ENCODE measurements at regions of chr4 and their contacts with region 1.

Region 1: GRCh38 chr4:153127760-153128494 is 76.3 kb upstream of the TRIM2 start:
- DNase-seq: peak; percentile 64 to 92 (median 81)
- ATAC-seq: peak; percentile 84 to 90 (median 88)
- H3K4me3 ChIP-seq: no peak overlapping the region
- H3K4me3 Mint-ChIP-seq: no peak overlapping the region
- H3K27ac ChIP-seq: no peak overlapping the region
- H3K27ac Mint-ChIP-seq: peak overlapping the region in 1 of 2 donors; percentile 6
- H3K4me1 ChIP-seq: peaks cover 0 to 3% of the 10 kb centered on the region in 2 experiments
- H3K4me1 Mint-ChIP-seq: peaks cover 0 to 5% (median 4%) of the 10 kb centered on the region in 3 donors
- H3K27me3 ChIP-seq: peaks cover 0 to 3% of the 10 kb centered on the region in 2 experiments
- H3K27me3 Mint-ChIP-seq: no peaks in the 10 kb centered on the region

Region 2: GRCh38 chr4:152849350-152849749 is 278.6 kb before region 1 on chr4:
- CTCF ChIA-PET with region 1: interaction called, 7 to 31 read pairs
- POLR2A ChIA-PET with region 1: no interaction called
- DNase-seq: no peak
- ATAC-seq: no peak
- H3K4me3 ChIP-seq: no peak overlapping the region
- H3K4me3 Mint-ChIP-seq: no peak overlapping the region
- H3K27ac ChIP-seq: no peak overlapping the region
- H3K27ac Mint-ChIP-seq: no peak overlapping the region
- H3K4me1 ChIP-seq: peaks cover 3 to 11% of the 10 kb centered on the region in 2 experiments
- H3K4me1 Mint-ChIP-seq: peaks cover 17 to 22% (median 20%) of the 10 kb centered on the region in 3 donors
- H3K27me3 ChIP-seq: no peaks in the 10 kb centered on the region
- H3K27me3 Mint-ChIP-seq: no peaks in the 10 kb centered on the region

Region 3: GRCh38 chr4:153083447-153083947 is 44.4 kb before region 1 on chr4:
- CTCF ChIA-PET with region 1: interaction called, 120 to 170 read pairs
- POLR2A ChIA-PET with region 1: interaction called in 1 of 2 experiments, 4 read pairs
- DNase-seq: peak in 29 of 35 experiments; percentile 14 to 81 (median 35)
- ATAC-seq: peak; percentile 53 to 59 (median 59)
- H3K4me3 ChIP-seq: no peak overlapping the region
- H3K4me3 Mint-ChIP-seq: peak overlapping the region in 1 of 3 donors; percentile 31
- H3K27ac ChIP-seq: no peak overlapping the region
- H3K27ac Mint-ChIP-seq: peak overlapping the region in 1 of 2 donors; percentile 86
- H3K4me1 ChIP-seq: peaks cover 0 to 55% of the 10 kb centered on the region in 2 experiments
- H3K4me1 Mint-ChIP-seq: peaks cover 50 to 64% (median 54%) of the 10 kb centered on the region in 3 donors
- H3K27me3 ChIP-seq: peaks cover 0 to 8% of the 10 kb centered on the region in 2 experiments
- H3K27me3 Mint-ChIP-seq: no peaks in the 10 kb centered on the region

Region 4: GRCh38 chr4:153089742-153090141 is 38.2 kb before region 1 on chr4:
- CTCF ChIA-PET with region 1: interaction called, 33 to 57 read pairs
- POLR2A ChIA-PET with region 1: interaction called in 1 of 2 experiments, 4 read pairs
- DNase-seq: no peak
- ATAC-seq: no peak
- H3K4me3 ChIP-seq: no peak overlapping the region
- H3K4me3 Mint-ChIP-seq: no peak overlapping the region
- H3K27ac ChIP-seq: no peak overlapping the region
- H3K27ac Mint-ChIP-seq: no peak overlapping the region
- H3K4me1 ChIP-seq: peaks cover 0 to 14% of the 10 kb centered on the region in 2 experiments
- H3K4me1 Mint-ChIP-seq: peaks cover 20 to 21% (median 20%) of the 10 kb centered on the region in 3 donors
- H3K27me3 ChIP-seq: peaks cover 0 to 4% of the 10 kb centered on the region in 2 experiments
- H3K27me3 Mint-ChIP-seq: no peaks in the 10 kb centered on the region

Region 5: GRCh38 chr4:153095448-153096204 is 32.3 kb before region 1 on chr4:
- CTCF ChIA-PET with region 1: interaction called, 6 to 21 read pairs
- POLR2A ChIA-PET with region 1: no interaction called
- DNase-seq: no peak
- ATAC-seq: no peak
- H3K4me3 ChIP-seq: no peak overlapping the region
- H3K4me3 Mint-ChIP-seq: no peak overlapping the region
- H3K27ac ChIP-seq: no peak overlapping the region
- H3K27ac Mint-ChIP-seq: no peak overlapping the region
- H3K4me1 ChIP-seq: peaks cover 0 to 5% of the 10 kb centered on the region in 2 experiments
- H3K4me1 Mint-ChIP-seq: peaks cover 5 to 12% (median 5%) of the 10 kb centered on the region in 3 donors
- H3K27me3 ChIP-seq: peaks cover 0 to 2% of the 10 kb centered on the region in 2 experiments
- H3K27me3 Mint-ChIP-seq: no peaks in the 10 kb centered on the region

Region 6: DNA sequence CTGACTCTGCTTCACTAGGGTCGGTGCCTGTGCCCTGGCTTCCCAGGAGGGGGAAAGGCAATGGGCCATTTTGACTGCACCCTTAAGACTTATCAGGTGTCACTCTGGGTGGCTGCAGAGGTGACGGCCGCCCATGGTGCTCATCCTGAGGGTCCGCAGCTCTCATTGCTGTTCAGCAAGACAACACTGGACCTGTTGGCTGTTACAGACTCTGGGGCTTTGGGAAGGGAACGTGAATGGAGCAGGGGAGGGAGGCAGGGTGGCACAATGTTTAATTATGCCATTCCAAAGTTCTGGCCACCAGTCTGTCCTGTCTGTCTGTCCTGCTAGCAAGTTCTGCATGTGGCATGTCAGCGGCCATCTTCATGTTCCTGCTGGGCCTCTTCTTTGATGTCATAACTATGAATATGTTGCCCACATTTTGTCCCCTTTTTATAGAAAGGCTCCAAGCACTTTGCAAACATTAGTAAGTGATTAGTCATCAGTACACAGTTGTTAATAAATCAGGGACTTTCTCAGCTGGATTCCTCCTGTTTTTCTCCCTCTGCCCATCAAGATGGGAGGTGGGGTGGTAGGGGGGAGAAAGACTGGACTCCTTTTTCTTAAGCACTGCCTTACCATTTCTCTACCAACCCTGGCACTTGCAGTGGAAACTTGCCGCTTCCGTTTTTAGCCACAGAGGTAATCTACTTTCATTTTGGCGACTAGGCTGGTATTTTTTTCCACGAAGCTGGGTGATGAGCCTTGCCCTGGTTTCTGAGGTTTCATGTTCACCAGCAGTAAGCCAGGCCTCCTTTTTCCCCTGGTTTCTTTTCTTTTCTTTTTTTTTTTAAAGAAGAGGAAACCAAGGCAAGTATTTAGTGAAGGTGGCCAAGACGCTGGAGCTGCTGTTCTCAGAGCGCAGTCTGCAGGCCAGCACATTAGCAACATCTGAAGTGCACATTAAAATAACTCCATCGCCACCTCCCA is 12.3 kb before region 1 on chr4:
- CTCF ChIA-PET with region 1: interaction called, 22 to 59 read pairs
- POLR2A ChIA-PET with region 1: interaction called, 3 to 25 read pairs
- DNase-seq: peak; percentile 36 to 88 (median 68)
- ATAC-seq: peak; percentile 63 to 76 (median 74)
- H3K4me3 ChIP-seq: peak overlapping the region; percentile 7 to 8
- H3K4me3 Mint-ChIP-seq: peak overlapping the region in 2 of 3 donors; percentile 65 to 72
- H3K27ac ChIP-seq: peak overlapping the region; percentile 88
- H3K27ac Mint-ChIP-seq: no peak overlapping the region
- H3K4me1 ChIP-seq: peaks cover 43 to 66% of the 10 kb centered on the region in 2 experiments
- H3K4me1 Mint-ChIP-seq: peaks cover 0 to 8% (median 1%) of the 10 kb centered on the region in 3 donors
- H3K27me3 ChIP-seq: no peaks in the 10 kb centered on the region
- H3K27me3 Mint-ChIP-seq: no peaks in the 10 kb centered on the region

Region 7: DNA sequence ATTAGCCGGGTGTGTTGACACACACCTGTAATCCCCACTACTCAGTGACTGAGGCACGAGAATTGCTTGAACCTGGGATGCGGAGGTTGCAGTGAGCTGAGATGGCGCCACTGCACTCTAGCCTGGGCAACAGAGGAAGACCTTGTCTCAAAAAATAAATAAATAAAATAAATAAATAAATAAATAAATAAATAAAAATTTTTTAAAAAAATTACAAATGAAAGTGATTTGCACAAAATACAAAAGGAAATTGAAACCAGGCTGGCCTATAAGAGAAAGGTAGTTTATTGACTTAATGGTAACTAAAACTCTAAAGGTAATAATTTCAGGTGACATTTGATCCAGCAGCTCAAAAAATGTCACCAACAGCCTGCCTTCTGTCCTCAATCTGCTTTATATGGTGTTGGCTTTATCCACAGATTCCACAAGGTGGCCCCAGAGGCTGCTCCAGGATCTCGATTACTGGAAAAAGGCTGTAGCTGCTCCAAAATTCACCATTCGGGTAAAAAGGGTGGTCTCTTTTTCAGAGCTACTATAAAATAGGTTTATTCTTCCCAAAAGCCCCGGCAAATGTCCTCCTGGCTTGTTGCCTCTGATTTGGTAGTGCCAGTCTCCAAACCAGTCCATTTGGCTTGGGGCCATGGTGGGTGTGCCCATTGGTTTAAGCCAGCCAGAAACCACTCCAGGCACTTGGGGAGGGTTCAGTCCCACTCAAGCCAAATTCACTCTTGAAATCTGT is 14.9 kb after region 1 on chr4:
- CTCF ChIA-PET with region 1: interaction called, 3 to 11 read pairs
- POLR2A ChIA-PET with region 1: no interaction called
- DNase-seq: peak; percentile 17 to 74 (median 39)
- ATAC-seq: peak; percentile 52 to 86 (median 74)
- H3K4me3 ChIP-seq: no peak overlapping the region
- H3K4me3 Mint-ChIP-seq: no peak overlapping the region
- H3K27ac ChIP-seq: no peak overlapping the region
- H3K27ac Mint-ChIP-seq: no peak overlapping the region
- H3K4me1 ChIP-seq: peaks cover 0 to 4% of the 10 kb centered on the region in 2 experiments
- H3K4me1 Mint-ChIP-seq: peaks cover 0 to 5% (median 4%) of the 10 kb centered on the region in 3 donors
- H3K27me3 ChIP-seq: peaks cover 0 to 6% of the 10 kb centered on the region in 2 experiments
- H3K27me3 Mint-ChIP-seq: no peaks in the 10 kb centered on the region

Measured in T-cell (primary cell).